Activated CD8-positive, alpha-beta T cell treated with anti-CD3 and anti-CD28 coated beads for 36 hours (primary cell): ENCODE measurements at regions of chr17 and their contacts with region 1.

Region 1: GRCh38 chr17:79400989-79401703 is 209.7 kb downstream of the RBFOX3 start:
- DNase-seq: peak; percentile 77
- ATAC-seq: peak; percentile 99
- H3K4me3 Mint-ChIP-seq: peak overlapping the region; percentile 55
- H3K27ac Mint-ChIP-seq: no peak overlapping the region
- H3K4me1 Mint-ChIP-seq: peaks cover 13% of the 10 kb centered on the region
- H3K27me3 Mint-ChIP-seq: peaks cover 33% of the 10 kb centered on the region
- CTCF ChIP-seq: peak; percentile 76

Region 2: DNA sequence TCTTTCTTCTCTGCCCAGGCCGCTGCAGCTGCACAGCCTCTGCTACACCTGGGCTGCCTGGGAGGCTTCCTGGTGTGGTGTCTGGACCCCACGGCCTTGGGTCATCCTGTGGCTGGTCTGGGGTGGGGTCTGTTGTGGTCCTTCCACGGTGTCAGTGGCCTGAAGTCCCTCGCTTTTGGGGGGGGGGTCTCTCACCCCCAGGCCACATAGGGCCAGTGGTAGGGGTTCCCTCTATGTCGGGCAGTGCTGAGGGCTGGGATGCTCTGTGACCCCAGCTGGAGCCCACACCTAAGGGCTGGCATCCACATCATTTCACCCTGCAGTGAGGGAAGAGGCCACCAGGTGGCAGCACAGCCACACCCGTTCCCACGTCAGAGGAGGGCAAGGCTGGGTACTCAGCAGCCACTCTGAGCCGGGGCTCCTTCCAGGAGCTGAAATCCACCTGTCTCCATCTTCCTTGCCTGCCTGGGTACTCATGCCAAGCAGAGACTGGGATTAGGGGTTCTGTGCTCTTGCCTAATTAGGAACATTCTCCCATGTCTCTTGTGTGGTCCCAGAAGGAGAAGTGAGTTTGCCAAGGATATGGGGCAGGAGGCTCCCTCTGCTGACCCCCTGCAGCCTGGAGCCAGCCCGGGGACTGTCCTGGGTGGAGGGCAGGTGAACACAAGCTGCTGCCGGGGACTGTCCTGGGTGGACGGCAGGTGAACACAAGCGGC is 313.6 kb before region 1 on chr17:
- CTCF ChIA-PET with region 1: interaction called, 10 read pairs
- POLR2A ChIA-PET with region 1: no interaction called
- intact Hi-C with region 1: no loop called
- DNase-seq: peak; percentile 85
- ATAC-seq: peak; percentile 93
- H3K4me3 Mint-ChIP-seq: no peak overlapping the region
- H3K27ac Mint-ChIP-seq: no peak overlapping the region
- H3K4me1 Mint-ChIP-seq: peaks cover 2% of the 10 kb centered on the region
- H3K27me3 Mint-ChIP-seq: no peaks in the 10 kb centered on the region
- CTCF ChIP-seq: peak; percentile 80